ENCODE measurements at regions of chr7 and their contacts with region 1.

Region 1: GRCh38 chr7:118288098-118288497 is 63.6 kb downstream of the ANKRD7 start:
- DNase-seq: peak in 3 of 9 donors; percentile 1 to 17 (median 2)
- ATAC-seq: no peak
- H3K4me3 ChIP-seq: no peak overlapping the region
- H3K4me3 Mint-ChIP-seq: peak overlapping the region in 8 of 10 donors; percentile 16 to 62 (median 35)
- H3K27ac ChIP-seq: no peak overlapping the region
- H3K27ac Mint-ChIP-seq: peak overlapping the region in 1 of 9 donors; percentile 78
- H3K4me1 ChIP-seq: peaks cover 6 to 14% of the 10 kb centered on the region in 2 donors
- H3K4me1 Mint-ChIP-seq: peaks cover 19 to 28% (median 22%) of the 10 kb centered on the region in 7 donors
- H3K27me3 ChIP-seq: peaks cover 0 to 7% of the 10 kb centered on the region in 2 donors
- H3K27me3 Mint-ChIP-seq: peaks cover 25 to 67% (median 38%) of the 10 kb centered on the region in 5 donors

Region 2: DNA sequence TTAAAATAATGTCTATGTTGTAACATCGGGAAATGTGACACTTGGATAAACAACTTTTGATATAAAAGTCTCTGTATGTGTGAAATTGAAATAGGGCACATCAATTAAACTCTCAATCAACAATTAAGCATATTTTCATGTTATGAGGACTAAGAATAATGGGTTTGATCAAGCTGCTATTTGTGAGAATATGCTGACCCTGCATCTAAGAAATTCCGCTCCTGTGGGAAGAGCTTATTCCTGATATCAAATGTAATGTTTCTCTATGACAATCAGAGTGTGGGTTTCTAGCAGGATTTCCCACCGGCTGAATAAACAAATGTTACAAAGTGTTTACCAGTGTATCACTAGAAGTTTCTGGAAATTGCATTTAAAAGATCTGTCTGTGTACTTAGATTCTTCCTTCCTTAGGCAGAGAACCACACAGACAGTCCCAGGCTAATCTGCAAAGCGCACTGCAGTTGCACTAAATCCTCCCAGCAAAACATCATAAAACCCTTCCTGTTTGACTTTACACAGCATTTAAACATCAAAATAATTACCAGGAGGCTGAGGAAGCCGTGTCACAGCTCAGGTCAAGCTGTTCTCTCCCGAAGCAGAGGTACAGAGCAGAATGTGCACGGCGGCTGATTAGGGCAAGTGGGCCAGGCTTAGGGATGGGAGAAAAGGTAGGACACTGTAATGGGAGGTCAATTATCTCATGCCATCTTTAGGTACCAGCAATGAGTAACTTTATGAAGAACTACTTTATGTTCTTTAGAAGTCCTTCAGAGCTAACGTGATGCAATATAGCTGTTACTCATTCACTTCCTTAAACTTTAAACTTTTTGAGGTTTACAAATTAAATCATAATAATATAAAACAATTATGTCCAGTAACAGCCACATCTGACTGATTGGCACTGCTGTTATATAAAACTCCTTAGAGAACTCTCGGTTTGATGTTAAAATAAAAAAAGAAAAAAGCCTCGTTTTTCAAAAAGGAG is 305.7 kb before region 1 on chr7:
- CTCF ChIA-PET with region 1: no interaction called
- POLR2A ChIA-PET with region 1: no interaction called
- intact Hi-C with region 1: no loop called
- DNase-seq: no peak
- ATAC-seq: no peak
- H3K4me3 ChIP-seq: no peak overlapping the region
- H3K4me3 Mint-ChIP-seq: no peak overlapping the region
- H3K27ac ChIP-seq: no peak overlapping the region
- H3K27ac Mint-ChIP-seq: no peak overlapping the region
- H3K4me1 ChIP-seq: no peaks in the 10 kb centered on the region
- H3K4me1 Mint-ChIP-seq: no peaks in the 10 kb centered on the region
- H3K27me3 ChIP-seq: no peaks in the 10 kb centered on the region
- H3K27me3 Mint-ChIP-seq: peaks cover 0 to 12% (median 0%) of the 10 kb centered on the region in 5 donors

Region 3: GRCh38 chr7:118311121-118311803 is 23.2 kb after region 1 on chr7:
- CTCF ChIA-PET with region 1: no interaction called
- POLR2A ChIA-PET with region 1: no interaction called
- intact Hi-C with region 1: loop called in 1 of 2 experiments (anchors 2 kb)
- DNase-seq: no peak
- ATAC-seq: peak; percentile 67
- H3K4me3 ChIP-seq: no peak overlapping the region
- H3K4me3 Mint-ChIP-seq: no peak overlapping the region
- H3K27ac ChIP-seq: no peak overlapping the region
- H3K27ac Mint-ChIP-seq: peak overlapping the region in 1 of 9 donors; percentile 54
- H3K4me1 ChIP-seq: no peaks in the 10 kb centered on the region
- H3K4me1 Mint-ChIP-seq: peaks cover 0 to 34% (median 0%) of the 10 kb centered on the region in 7 donors
- H3K27me3 ChIP-seq: no peaks in the 10 kb centered on the region
- H3K27me3 Mint-ChIP-seq: peaks cover 0 to 14% (median 9%) of the 10 kb centered on the region in 5 donors

Region 4: GRCh38 chr7:118404211-118404610 is 116.1 kb after region 1 on chr7:
- CTCF ChIA-PET with region 1: no interaction called
- POLR2A ChIA-PET with region 1: no interaction called
- intact Hi-C with region 1: no loop called
- DNase-seq: no peak
- ATAC-seq: no peak
- H3K4me3 ChIP-seq: no peak overlapping the region
- H3K4me3 Mint-ChIP-seq: no peak overlapping the region
- H3K27ac ChIP-seq: no peak overlapping the region
- H3K27ac Mint-ChIP-seq: no peak overlapping the region
- H3K4me1 ChIP-seq: no peaks in the 10 kb centered on the region
- H3K4me1 Mint-ChIP-seq: no peaks in the 10 kb centered on the region
- H3K27me3 ChIP-seq: no peaks in the 10 kb centered on the region
- H3K27me3 Mint-ChIP-seq: no peaks in the 10 kb centered on the region